Activated B cell treated with CpG ODN at 0.5 μM for 24 hours (primary cell): ENCODE measurements at regions of chr10 and their contacts with region 1.

Region 1: GRCh38 chr10:109978481-109978880 is 29.3 kb upstream of the ADD3 start:
- DNase-seq: no peak
- ATAC-seq: peak; percentile 42
- H3K4me3 Mint-ChIP-seq: no peak overlapping the region
- H3K27ac Mint-ChIP-seq: no peak overlapping the region
- H3K4me1 Mint-ChIP-seq: no peaks in the 10 kb centered on the region
- H3K27me3 Mint-ChIP-seq: no peaks in the 10 kb centered on the region
- CTCF ChIP-seq: peak; percentile 19

Region 2: GRCh38 chr10:108060246-108060645 is 1918.2 kb before region 1 on chr10:
- CTCF ChIA-PET with region 1: no interaction called
- POLR2A ChIA-PET with region 1: no interaction called
- intact Hi-C with region 1: no loop called
- DNase-seq: no peak
- ATAC-seq: no peak
- H3K4me3 Mint-ChIP-seq: no peak overlapping the region
- H3K27ac Mint-ChIP-seq: no peak overlapping the region
- H3K4me1 Mint-ChIP-seq: no peaks in the 10 kb centered on the region
- H3K27me3 Mint-ChIP-seq: no peaks in the 10 kb centered on the region
- CTCF ChIP-seq: no peak

Region 3: DNA sequence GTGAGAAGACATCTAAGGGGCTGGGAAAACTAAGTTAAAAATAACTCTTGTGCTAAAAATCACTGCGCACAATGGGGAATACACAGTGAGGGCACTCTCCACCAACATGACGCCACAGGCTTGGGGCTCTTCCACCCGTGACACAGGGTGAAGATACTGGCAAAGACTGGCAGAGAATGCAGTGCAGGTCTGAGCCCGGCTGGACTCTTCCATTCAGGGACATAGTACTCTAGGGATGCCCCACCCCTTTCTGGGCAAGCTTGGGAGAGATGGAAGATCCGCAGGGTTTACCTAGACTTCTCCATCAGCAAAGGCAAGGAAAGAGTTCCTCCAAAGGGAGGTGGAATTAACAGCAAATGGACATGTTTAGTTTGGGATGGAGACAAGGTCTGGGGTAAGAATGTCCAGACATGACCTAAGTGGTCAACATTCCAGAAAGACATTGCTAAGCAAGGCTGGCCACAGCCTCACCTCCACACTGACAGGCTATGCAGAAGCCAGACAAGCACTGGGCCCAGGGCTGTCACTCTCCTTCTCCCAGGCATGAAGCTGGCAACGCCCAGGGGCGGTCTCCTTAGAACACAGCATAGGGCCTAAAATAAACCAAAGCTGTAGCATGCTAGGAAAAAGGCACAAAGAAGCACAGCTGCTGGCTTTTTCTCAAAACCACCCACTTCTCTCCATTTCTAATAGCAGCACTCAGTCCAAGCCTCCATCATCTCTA is 83.2 kb before region 1 on chr10:
- CTCF ChIA-PET with region 1: no interaction called
- POLR2A ChIA-PET with region 1: interaction called, 10 read pairs
- intact Hi-C with region 1: no loop called
- DNase-seq: no peak
- ATAC-seq: no peak
- H3K4me3 Mint-ChIP-seq: no peak overlapping the region
- H3K27ac Mint-ChIP-seq: no peak overlapping the region
- H3K4me1 Mint-ChIP-seq: peaks cover 8% of the 10 kb centered on the region
- H3K27me3 Mint-ChIP-seq: no peaks in the 10 kb centered on the region
- CTCF ChIP-seq: no peak

Region 4: DNA sequence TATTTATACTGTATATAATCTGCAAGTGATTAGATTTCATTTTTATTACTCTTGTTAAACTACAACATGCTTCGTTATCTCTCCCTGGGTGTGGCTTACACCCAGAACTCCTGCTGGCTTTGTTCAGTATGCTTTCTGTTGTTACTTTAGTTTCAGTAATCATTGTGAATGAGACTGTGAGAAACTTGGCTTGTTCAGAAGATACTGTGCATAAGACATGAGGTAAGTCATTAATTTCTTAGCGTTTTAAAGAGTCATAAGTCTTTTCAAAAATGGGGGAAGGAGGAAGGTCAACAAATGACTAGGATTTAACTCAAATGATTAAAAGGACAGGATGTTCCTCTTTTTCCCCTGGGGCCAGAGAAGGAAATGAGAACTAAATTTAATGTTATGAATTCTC is 17.7 kb after region 1 on chr10:
- CTCF ChIA-PET with region 1: interaction called, 5 read pairs
- POLR2A ChIA-PET with region 1: interaction called, 4 read pairs
- intact Hi-C with region 1: loop called (anchors 2 kb)
- DNase-seq: no peak
- ATAC-seq: peak; percentile 72
- H3K4me3 Mint-ChIP-seq: peak overlapping the region; percentile 59
- H3K27ac Mint-ChIP-seq: peak overlapping the region; percentile 63
- H3K4me1 Mint-ChIP-seq: peaks cover 47% of the 10 kb centered on the region
- H3K27me3 Mint-ChIP-seq: no peaks in the 10 kb centered on the region
- CTCF ChIP-seq: no peak

Region 5: DNA sequence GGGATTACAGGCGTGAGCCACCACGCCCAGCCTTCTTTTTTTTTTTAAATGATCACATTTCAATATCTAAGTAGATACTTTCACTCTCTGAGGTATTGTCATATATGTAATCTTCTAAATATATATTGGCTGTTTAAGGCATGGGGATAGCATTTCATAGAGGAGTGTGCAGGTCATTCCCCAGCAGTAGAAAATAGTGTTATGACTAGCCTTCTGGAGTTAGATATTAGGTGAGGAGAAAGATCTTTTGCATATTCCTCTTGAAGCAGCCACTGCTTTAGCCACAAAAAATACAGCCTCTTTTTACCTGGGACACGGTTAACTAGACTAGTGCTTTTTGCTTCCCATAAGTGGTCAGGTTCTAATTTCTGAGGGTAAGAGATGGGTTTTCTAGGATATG is 58.2 kb after region 1 on chr10:
- CTCF ChIA-PET with region 1: no interaction called
- POLR2A ChIA-PET with region 1: no interaction called
- intact Hi-C with region 1: loop called (anchors 5 kb)
- DNase-seq: no peak
- ATAC-seq: peak; percentile 25
- H3K4me3 Mint-ChIP-seq: peak overlapping the region; percentile 57
- H3K27ac Mint-ChIP-seq: peak overlapping the region; percentile 11
- H3K4me1 Mint-ChIP-seq: peaks cover 73% of the 10 kb centered on the region
- H3K27me3 Mint-ChIP-seq: no peaks in the 10 kb centered on the region
- CTCF ChIP-seq: no peak

Region 6: GRCh38 chr10:110076559-110077318 is 98.3 kb after region 1 on chr10:
- CTCF ChIA-PET with region 1: interaction called, 4 read pairs
- POLR2A ChIA-PET with region 1: interaction called, 4 read pairs
- intact Hi-C with region 1: loop called (anchors 1 kb)
- DNase-seq: no peak
- ATAC-seq: peak; percentile 59
- H3K4me3 Mint-ChIP-seq: peak overlapping the region; percentile 85
- H3K27ac Mint-ChIP-seq: peak overlapping the region; percentile 99
- H3K4me1 Mint-ChIP-seq: peaks cover 84% of the 10 kb centered on the region
- H3K27me3 Mint-ChIP-seq: no peaks in the 10 kb centered on the region
- CTCF ChIP-seq: no peak

Region 7: GRCh38 chr10:110101464-110102144 is 123.1 kb after region 1 on chr10:
- CTCF ChIA-PET with region 1: interaction called, 5 read pairs
- POLR2A ChIA-PET with region 1: no interaction called
- intact Hi-C with region 1: loop called (anchors 1 kb)
- DNase-seq: no peak
- ATAC-seq: peak; percentile 55
- H3K4me3 Mint-ChIP-seq: no peak overlapping the region
- H3K27ac Mint-ChIP-seq: peak overlapping the region; percentile 74
- H3K4me1 Mint-ChIP-seq: peaks cover 42% of the 10 kb centered on the region
- H3K27me3 Mint-ChIP-seq: no peaks in the 10 kb centered on the region
- CTCF ChIP-seq: no peak

Region 8: GRCh38 chr10:110279407-110279986 is 301.0 kb after region 1 on chr10:
- CTCF ChIA-PET with region 1: no interaction called
- POLR2A ChIA-PET with region 1: no interaction called
- intact Hi-C with region 1: loop called (anchors 1 kb)
- DNase-seq: no peak
- ATAC-seq: peak; percentile 68
- H3K4me3 Mint-ChIP-seq: peak overlapping the region; percentile 38
- H3K27ac Mint-ChIP-seq: no peak overlapping the region
- H3K4me1 Mint-ChIP-seq: peaks cover 24% of the 10 kb centered on the region
- H3K27me3 Mint-ChIP-seq: no peaks in the 10 kb centered on the region
- CTCF ChIP-seq: peak; percentile 92